Left cardiac atrium (tissue), 4 donors: ENCODE measurements at regions of chr3 and their contacts with region 1.

Region 1: DNA sequence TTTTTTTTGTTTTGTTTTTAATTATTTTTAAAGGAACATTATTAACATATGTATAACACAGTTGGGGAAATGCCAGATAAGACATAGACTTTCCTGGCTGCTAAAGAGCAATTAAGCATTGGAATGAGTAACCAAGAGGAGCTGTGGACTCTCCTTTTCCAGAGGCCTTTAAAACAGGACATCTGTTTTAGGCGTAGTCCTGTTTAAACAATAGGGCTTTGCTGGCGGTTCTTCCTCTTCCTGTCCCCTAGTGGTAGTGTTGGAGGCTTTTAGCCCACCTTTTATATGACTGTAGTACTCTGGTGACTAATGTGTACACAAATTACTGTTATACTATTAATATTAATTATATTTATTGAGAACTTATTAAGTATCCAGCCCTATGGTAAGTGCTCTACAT is 81.9 kb downstream of the PPARG start:
- DNase-seq: no peak
- ATAC-seq: peak; percentile 47 to 69

Region 2: DNA sequence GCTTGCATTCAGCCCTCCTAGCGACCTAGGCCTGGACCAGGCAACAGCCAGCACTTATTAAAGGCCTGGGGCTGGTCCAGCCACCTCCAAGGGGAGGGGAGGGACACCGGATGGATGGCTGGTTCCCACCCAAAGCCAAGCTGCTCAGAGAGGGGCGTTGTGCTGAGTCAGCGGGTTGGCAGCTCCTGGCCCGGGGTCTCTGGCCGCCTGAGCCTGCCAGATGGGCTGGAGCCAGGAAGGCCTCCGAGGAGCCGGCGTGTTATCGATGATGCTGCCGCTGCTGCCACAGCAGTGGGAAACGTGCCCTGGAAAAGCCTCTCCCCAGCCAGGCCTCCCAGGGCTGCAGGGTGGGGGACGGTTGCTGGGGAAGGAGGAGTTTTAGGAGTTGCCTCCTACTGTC is 70.2 kb after region 1 on chr3:
- intact Hi-C with region 1: loop called in 1 of 2 experiments (anchors 10 kb)
- DNase-seq: peak; percentile 82
- ATAC-seq: peak; percentile 82 to 84